MCF 10A (cell line): ENCODE measurements at regions of chr6 and their contacts with region 1.

Region 1: GRCh38 chr6:29834564-29835436 is 7.2 kb downstream of the HLA-G start:
- DNase-seq: peak; percentile 42
- H3K4me3 Mint-ChIP-seq: no peak overlapping the region
- H3K27ac Mint-ChIP-seq: no peak overlapping the region
- H3K4me1 Mint-ChIP-seq: peaks cover 6% of the 10 kb centered on the region
- H3K27me3 Mint-ChIP-seq: peaks cover 45% of the 10 kb centered on the region
- CTCF ChIP-seq: peak; percentile 91

Region 2: GRCh38 chr6:29824144-29824543 is 10.7 kb before region 1 on chr6:
- CTCF ChIA-PET with region 1: interaction called, 26 read pairs
- POLR2A ChIA-PET with region 1: no interaction called
- intact Hi-C with region 1: no loop called
- DNase-seq: no peak
- H3K4me3 Mint-ChIP-seq: no peak overlapping the region
- H3K27ac Mint-ChIP-seq: no peak overlapping the region
- H3K4me1 Mint-ChIP-seq: peaks cover 8% of the 10 kb centered on the region
- H3K27me3 Mint-ChIP-seq: no peaks in the 10 kb centered on the region
- CTCF ChIP-seq: no peak

Region 3: DNA sequence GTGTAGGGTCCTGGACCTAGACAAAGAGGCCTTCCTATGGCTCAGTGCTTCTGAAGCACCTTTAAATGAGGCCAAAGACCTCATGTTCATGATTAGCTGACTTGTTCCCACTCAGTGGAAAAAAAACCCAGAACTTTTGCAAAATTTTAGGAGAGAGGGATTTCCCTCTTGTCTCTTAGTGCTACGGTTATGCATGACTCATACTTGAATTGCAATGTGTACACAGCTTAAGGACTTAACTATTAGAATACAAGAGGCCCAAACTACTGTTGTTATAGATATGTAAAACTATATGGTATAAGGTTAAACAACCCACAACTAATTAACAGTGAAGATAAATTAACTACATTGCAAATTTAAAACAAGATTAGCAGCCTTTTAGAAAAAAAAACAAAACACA is 75.2 kb after region 1 on chr6:
- CTCF ChIA-PET with region 1: no interaction called
- POLR2A ChIA-PET with region 1: no interaction called
- intact Hi-C with region 1: no loop called
- DNase-seq: peak; percentile 20
- H3K4me3 Mint-ChIP-seq: no peak overlapping the region
- H3K27ac Mint-ChIP-seq: no peak overlapping the region
- H3K4me1 Mint-ChIP-seq: no peaks in the 10 kb centered on the region
- H3K27me3 Mint-ChIP-seq: peaks cover 48% of the 10 kb centered on the region
- CTCF ChIP-seq: no peak